ENCODE measurements at regions of chr2 and their contacts with region 1.

Region 1: DNA sequence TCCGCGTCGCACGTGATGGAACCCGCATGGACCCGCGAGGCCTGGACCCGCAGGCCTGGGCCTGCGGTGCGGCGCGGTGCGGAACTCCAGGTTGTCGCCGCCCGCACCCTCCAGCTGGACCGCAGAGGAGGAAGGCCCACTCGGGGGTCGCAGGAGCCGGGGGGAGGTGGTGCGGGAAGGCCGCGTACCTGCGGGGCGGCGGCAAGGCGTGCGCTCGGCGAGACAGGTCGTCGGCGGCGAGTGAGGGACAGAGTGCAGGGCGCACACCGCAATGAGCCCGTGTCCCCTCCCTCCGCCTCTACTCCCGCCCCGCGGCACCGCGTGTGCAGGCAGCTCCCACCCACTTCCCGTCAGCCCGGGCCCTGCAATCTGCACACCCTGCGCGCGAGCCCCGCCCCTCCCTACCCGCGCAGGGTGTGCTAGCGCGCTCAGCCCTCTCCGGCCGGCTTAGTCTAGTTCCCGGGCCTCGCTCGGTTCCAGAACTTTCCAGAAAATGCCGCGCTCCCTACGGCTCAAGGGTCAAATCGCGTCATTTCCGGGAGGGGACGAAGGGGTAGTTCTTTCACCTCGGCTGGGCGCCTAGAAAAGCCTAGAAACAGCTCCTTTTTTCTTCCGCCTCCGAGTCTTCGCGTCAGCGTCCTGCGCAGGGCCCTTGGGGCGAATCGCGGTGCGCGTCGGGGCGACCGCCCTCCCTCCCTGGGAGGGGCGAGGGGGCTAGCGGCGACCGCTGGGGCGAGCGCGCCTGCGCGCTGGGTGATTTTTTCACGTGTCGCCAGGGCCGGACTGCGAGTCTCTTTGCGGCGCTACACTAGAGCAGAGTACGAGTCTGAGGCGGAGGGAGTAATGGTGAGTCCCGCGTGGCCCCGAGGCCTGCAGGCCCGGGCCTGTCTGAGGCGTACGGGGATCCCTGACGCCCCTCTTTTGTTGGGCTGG is at the starts of genes HSPD1 and HSPE1:
- DNase-seq: peak; percentile 98
- ATAC-seq: peak; percentile 94 to 97
- total RNA-seq, gene HSPD1: 164 to 166 TPM
- total RNA-seq, gene HSPE1: 111 to 117 TPM

Region 2: GRCh38 chr2:197229509-197230443 is 270.1 kb before region 1 on chr2:
- intact Hi-C with region 1: no loop called
- DNase-seq: no peak
- ATAC-seq: peak in 1 of 2 donors; percentile 66

Region 3: DNA sequence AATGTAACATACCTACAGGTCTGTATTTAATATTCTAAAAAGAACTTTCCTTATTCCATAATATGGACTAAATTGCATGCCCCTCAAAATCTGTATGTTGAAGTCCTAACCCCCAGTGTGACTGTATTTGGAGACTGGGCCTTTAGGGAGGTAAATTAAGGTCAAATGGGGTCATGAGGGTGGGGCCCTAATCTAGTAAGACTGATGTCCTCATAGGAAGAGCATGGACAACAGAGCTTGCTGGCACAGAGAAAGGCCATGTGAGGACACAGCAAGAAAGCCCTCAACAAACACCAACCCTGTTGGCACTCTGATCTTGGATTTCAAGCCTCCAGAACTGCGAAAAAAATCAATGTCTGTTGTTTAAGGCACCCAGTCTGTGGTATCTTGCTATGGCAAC is 83.6 kb before region 1 on chr2:
- intact Hi-C with region 1: loop called in 1 of 2 experiments (anchors 10 kb)
- DNase-seq: no peak
- ATAC-seq: no peak

Region 4: GRCh38 chr2:197453161-197453914 is 46.5 kb before region 1 on chr2 and contains the start of gene COQ10B:
- intact Hi-C with region 1: loop called in 1 of 2 experiments (anchors 5 kb)
- DNase-seq: peak; percentile 100
- ATAC-seq: peak; percentile 98
- total RNA-seq, gene COQ10B: 23.0 to 43.4 TPM

Region 5: GRCh38 chr2:197515739-197516392 is 16.0 kb after region 1 on chr2 and contains the start of gene MOB4:
- intact Hi-C with region 1: loop called in 1 of 2 experiments (anchors 2 kb)
- DNase-seq: peak; percentile 95
- ATAC-seq: peak; percentile 98 to 99
- total RNA-seq, gene MOB4: 19.8 to 32.6 TPM